ENCODE measurements at regions of chr20 and their contacts with region 1.

Region 1: DNA sequence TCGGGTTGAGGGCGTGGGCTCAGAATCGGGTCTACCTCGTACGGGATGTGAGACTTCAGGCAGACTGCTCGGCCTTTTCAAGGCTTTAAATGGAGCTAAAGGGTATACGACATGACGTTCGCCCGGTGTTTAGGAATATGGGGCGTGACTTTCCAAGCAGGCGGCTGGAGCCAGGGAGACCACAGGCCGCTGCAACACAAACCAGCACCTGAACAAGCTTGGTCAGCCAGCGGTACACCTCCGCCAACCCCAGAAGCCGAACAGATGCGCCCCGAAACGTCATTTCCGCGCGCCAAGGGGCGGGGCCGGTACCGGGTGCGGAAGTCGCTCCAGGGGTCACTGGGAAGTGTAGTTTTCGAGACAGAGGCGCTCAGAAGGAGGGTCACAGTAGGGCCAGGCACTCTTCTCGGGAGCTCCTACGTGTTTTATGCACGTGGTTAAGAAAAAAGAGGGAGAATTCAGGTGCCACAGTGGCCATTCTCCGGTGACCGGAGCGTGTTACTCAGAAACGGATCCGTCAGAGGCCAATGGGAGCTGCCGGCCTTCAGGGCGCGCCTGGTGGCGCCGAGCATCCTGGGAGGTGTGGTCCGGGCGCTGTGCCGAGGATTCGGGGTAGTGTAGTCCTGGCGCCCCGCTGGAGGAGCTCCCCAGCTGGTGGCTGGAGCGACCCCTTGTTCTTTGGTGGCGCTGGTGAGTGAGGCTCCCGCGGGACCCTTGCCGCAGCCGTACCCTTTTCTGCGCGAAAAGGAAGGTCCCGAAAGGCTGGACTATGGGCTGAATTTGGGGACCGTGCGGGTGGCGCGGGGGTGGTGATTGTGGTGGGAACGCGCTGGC is at the start of gene ZNF133:
- DNase-seq: peak; percentile 98
- ATAC-seq: peak; percentile 94
- H3K4me3 ChIP-seq: peak within 1 kb of the TSS; percentile 88 to 99 (median 96)
- H3K4me3 Mint-ChIP-seq: peak within 1 kb of the TSS; percentile 90
- H3K27ac ChIP-seq: peak within 1 kb of the TSS; percentile 89 to 97
- H3K27ac Mint-ChIP-seq: peak within 1 kb of the TSS; percentile 96
- H3K4me1 ChIP-seq: peaks cover 12 to 15% of the 10 kb centered on the region in 2 donors
- H3K4me1 Mint-ChIP-seq: peaks cover 23% of the 10 kb centered on the region
- H3K27me3 ChIP-seq: peaks cover 0 to 19% (median 7%) of the 10 kb centered on the region in 4 experiments
- H3K27me3 Mint-ChIP-seq: peaks cover 28% of the 10 kb centered on the region
- CTCF ChIP-seq: no peak
- total RNA-seq, gene ZNF133: 13.6 and 14.9 TPM in 2 replicates

Region 2: GRCh38 chr20:17878912-17879602 is 409.1 kb before region 1 on chr20:
- CTCF ChIA-PET with region 1: no interaction called
- POLR2A ChIA-PET with region 1: interaction called, 10 read pairs
- intact Hi-C with region 1: no loop called
- DNase-seq: peak; percentile 69
- ATAC-seq: peak; percentile 74
- H3K4me3 ChIP-seq: peak overlapping the region in 2 of 5 experiments; percentile 9 to 12
- H3K4me3 Mint-ChIP-seq: peak overlapping the region; percentile 71
- H3K27ac ChIP-seq: peak overlapping the region; percentile 64 to 71
- H3K27ac Mint-ChIP-seq: peak overlapping the region; percentile 82
- H3K4me1 ChIP-seq: peaks cover 58 to 65% of the 10 kb centered on the region in 2 donors
- H3K4me1 Mint-ChIP-seq: peaks cover 56% of the 10 kb centered on the region
- H3K27me3 ChIP-seq: no peaks in the 10 kb centered on the region
- H3K27me3 Mint-ChIP-seq: no peaks in the 10 kb centered on the region
- CTCF ChIP-seq: peak; percentile 65

Region 3: DNA sequence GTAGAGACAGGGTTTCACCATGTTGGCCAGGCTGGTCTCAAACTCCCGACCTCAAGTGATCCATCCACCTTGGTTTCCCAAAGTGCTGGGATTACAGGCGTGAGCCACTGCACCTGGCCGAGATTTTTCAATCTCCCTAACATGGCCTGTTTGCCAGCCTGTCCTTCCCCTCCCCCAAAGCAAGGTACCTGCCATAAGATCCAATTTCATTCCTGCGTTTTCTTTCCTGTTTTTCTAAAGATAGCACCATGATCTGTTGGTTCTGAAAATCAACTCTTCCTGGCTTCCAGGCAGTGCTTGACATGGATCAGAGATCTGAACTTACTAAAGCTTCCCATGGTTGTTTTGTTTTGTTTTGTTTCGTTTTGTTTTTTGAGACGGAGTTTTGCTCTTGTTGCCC is 311.8 kb before region 1 on chr20:
- CTCF ChIA-PET with region 1: no interaction called
- POLR2A ChIA-PET with region 1: no interaction called
- intact Hi-C with region 1: no loop called
- DNase-seq: no peak
- ATAC-seq: no peak
- H3K4me3 ChIP-seq: no peak overlapping the region
- H3K4me3 Mint-ChIP-seq: no peak overlapping the region
- H3K27ac ChIP-seq: no peak overlapping the region
- H3K27ac Mint-ChIP-seq: peak overlapping the region; percentile 50
- H3K4me1 ChIP-seq: peaks cover 29 to 31% of the 10 kb centered on the region in 2 donors
- H3K4me1 Mint-ChIP-seq: peaks cover 43% of the 10 kb centered on the region
- H3K27me3 ChIP-seq: no peaks in the 10 kb centered on the region
- H3K27me3 Mint-ChIP-seq: no peaks in the 10 kb centered on the region
- CTCF ChIP-seq: no peak

Region 4: GRCh38 chr20:18276821-18277220 is 11.3 kb before region 1 on chr20:
- CTCF ChIA-PET with region 1: interaction called, 15 read pairs
- POLR2A ChIA-PET with region 1: no interaction called
- intact Hi-C with region 1: no loop called
- DNase-seq: peak; percentile 68
- ATAC-seq: peak; percentile 49
- H3K4me3 ChIP-seq: no peak overlapping the region
- H3K4me3 Mint-ChIP-seq: no peak overlapping the region
- H3K27ac ChIP-seq: no peak overlapping the region
- H3K27ac Mint-ChIP-seq: no peak overlapping the region
- H3K4me1 ChIP-seq: peaks cover 0 to 4% of the 10 kb centered on the region in 2 donors
- H3K4me1 Mint-ChIP-seq: no peaks in the 10 kb centered on the region
- H3K27me3 ChIP-seq: peaks cover 0 to 30% (median 17%) of the 10 kb centered on the region in 4 experiments
- H3K27me3 Mint-ChIP-seq: peaks cover 31% of the 10 kb centered on the region
- CTCF ChIP-seq: peak; percentile 71

Region 5: DNA sequence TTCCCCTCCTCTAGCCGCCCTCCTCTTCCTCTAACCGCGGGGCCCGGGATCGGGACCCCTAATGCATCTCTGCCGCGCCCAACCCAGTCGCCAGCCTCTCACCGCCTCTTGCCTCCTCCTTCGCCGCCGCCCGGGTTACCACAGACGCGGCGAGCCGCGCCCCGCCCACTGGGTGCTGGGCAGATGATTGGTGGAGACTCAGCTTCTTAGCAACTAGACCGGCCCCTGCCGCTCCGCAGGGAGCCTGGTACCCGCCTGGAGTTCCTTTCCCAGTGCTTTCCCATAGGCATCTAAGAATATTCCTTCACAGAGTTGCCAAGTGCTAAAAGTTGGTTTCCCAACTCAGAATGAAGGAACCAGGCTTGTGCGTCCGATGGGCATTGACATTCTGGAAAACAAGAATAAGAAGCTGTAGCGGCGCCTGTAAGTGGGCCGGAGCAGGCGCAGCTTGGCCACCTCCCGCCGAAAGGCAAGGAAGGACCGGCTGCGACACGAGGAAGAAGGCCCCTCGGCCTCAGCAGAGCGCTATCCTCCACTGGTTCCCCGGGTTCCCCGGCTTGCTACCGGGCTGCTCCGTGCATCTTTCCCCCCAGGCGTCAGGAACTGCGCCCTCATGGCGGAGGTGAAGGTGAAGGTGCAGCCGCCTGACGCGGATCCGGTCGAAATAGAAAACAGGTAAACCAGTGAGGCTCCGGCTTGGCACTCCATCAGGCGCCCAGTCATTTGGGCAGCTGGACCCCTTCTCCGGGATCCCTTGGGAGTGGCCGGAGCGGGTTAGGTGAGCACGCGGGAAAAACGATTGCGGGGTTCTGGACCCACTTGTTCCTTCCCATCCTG is 179.0 kb after region 1 on chr20 and contains the starts of genes DZANK1 and POLR3F:
- CTCF ChIA-PET with region 1: interaction called, 3 read pairs
- POLR2A ChIA-PET with region 1: interaction called, 5 read pairs
- intact Hi-C with region 1: loop called (anchors 1 kb)
- DNase-seq: peak; percentile 94
- ATAC-seq: peak; percentile 95
- H3K4me3 ChIP-seq: peak within 1 kb of the TSS; percentile 54 to 97 (median 85)
- H3K4me3 Mint-ChIP-seq: peak within 1 kb of the TSS; percentile 97
- H3K27ac ChIP-seq: peak within 1 kb of the TSS; percentile 39 to 81
- H3K27ac Mint-ChIP-seq: peak within 1 kb of the TSS; percentile 97
- H3K4me1 ChIP-seq: peaks cover 12 to 15% of the 10 kb centered on the region in 2 donors
- H3K4me1 Mint-ChIP-seq: peaks cover 25% of the 10 kb centered on the region
- H3K27me3 ChIP-seq: no peaks in the 10 kb centered on the region
- H3K27me3 Mint-ChIP-seq: no peaks in the 10 kb centered on the region
- CTCF ChIP-seq: no peak
- total RNA-seq, gene DZANK1: 5.6 TPM in 2 replicates
- total RNA-seq, gene POLR3F: 13.1 and 13.7 TPM in 2 replicates

Region 6: DNA sequence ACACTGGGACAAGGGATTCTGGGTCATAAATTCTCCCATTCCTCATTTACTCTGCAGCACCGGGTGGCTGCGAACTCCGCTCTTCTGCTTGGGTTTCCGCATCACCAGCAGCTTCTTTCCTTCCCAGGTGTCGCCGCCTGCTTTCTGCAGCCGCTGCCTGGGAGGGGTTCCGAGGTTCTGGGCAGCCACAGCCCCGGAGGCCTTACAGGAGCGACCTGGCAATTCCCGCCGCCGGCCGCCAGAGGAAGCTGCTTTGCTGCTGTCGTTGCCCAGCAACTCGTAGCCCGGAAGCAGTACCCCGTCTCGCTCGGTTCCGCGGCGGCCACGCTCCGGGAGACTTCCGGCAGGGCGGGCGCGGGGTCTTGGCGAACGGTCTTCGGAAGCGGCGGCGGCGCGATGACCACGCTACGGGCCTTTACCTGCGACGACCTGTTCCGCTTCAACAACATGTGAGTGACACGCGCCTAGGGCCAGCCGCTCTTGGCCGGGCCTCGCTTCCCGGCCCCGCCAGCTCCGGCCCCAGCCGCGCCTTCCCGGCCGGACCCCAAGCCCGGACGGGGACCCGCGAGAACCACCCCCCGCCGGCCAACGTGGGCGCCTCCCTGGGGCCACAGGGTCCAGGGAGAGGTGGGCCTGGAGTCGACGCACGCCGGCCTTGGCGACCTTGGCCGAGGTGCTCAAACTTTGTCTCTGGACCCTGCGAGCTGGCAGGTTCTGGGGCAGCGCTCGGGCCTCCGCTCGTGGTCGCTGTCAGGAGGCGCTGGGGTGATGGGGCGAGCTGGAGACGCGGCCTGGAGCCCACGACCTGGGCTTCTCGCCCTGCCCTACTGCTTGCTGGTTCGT is 1729.1 kb after region 1 on chr20 and contains the start of gene NAA20:
- CTCF ChIA-PET with region 1: no interaction called
- POLR2A ChIA-PET with region 1: interaction called, 3 read pairs
- intact Hi-C with region 1: loop called (anchors 10 kb)
- DNase-seq: peak; percentile 91
- ATAC-seq: peak; percentile 98
- H3K4me3 ChIP-seq: peak within 1 kb of the TSS; percentile 41 to 91 (median 83)
- H3K4me3 Mint-ChIP-seq: peak within 1 kb of the TSS; percentile 94
- H3K27ac ChIP-seq: peak within 1 kb of the TSS; percentile 1 to 86
- H3K27ac Mint-ChIP-seq: peak within 1 kb of the TSS; percentile 94
- H3K4me1 ChIP-seq: peaks cover 12 to 27% of the 10 kb centered on the region in 2 donors
- H3K4me1 Mint-ChIP-seq: peaks cover 42% of the 10 kb centered on the region
- H3K27me3 ChIP-seq: no peaks in the 10 kb centered on the region
- H3K27me3 Mint-ChIP-seq: no peaks in the 10 kb centered on the region
- CTCF ChIP-seq: peak; percentile 73
- total RNA-seq, gene NAA20: 25.5 and 27.1 TPM in 2 replicates